ENCODE measurements at regions of chr16 and their contacts with region 1.

Region 1: DNA sequence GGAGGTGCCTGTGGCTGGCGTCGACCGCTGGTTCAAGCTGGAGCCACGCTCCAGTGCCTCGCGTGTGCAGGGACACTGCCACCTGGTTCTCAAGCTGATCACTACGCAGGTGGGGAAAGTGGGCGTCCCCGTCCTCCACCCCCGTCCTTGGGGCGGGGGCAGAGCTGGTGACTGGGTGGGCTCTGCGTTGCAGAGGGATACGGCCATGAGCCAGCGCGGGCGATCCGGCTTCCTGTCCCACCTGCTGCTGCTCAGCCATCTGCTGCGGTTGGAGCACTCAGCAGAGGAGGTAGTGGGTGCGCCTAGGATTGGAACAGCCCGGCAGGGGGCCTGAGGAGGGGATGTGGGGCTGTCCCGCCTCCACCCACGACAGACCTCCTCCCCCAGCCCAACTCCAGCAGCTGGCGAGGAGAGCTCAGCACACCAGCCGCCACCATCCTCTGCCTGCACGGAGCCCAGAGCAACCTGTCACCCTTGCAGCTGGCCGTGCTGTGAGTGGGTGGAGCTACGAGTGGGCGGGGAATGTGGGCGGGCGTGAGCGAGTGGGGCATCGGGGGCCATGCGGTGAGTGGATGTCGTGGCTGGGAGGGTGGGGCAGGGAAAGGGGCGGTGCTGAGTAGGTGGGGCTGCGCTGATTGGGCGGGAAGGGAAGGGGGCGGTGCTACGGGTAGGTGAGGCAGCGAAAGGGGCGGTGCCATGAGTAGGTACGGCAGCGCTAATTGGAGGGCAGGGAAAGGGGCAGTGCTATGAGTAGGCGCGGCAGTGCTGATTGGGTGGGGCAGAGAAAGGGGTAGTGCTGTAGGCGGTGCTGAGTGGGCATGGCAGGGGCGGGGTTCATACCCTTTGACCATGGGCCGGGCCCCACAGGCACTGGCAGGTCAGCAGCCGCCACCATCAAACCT is 8.9 kb downstream of the TSR3 start:
- DNase-seq: peak; percentile 98
- ATAC-seq: peak; percentile 86
- H3K4me3 ChIP-seq: peak overlapping the region in 4 of 5 experiments; percentile 38 to 68 (median 44)
- H3K4me3 Mint-ChIP-seq: peak overlapping the region; percentile 86
- H3K27ac ChIP-seq: peak overlapping the region in 1 of 2 donors; percentile 42
- H3K27ac Mint-ChIP-seq: peak overlapping the region; percentile 91
- H3K4me1 ChIP-seq: peaks cover 16 to 30% of the 10 kb centered on the region in 2 donors
- H3K4me1 Mint-ChIP-seq: peaks cover 23% of the 10 kb centered on the region
- H3K27me3 ChIP-seq: no peaks in the 10 kb centered on the region
- H3K27me3 Mint-ChIP-seq: no peaks in the 10 kb centered on the region
- CTCF ChIP-seq: peak; percentile 23

Region 2: GRCh38 chr16:1308977-1309885 is 33.5 kb before region 1 on chr16 and contains the start of gene UBE2I:
- CTCF ChIA-PET with region 1: interaction called, 3 read pairs
- POLR2A ChIA-PET with region 1: interaction called, 11 read pairs
- intact Hi-C with region 1: loop called (anchors 2 kb)
- DNase-seq: peak; percentile 100
- ATAC-seq: peak; percentile 74
- H3K4me3 ChIP-seq: peak within 1 kb of the TSS; percentile 80 to 90 (median 86)
- H3K4me3 Mint-ChIP-seq: peak within 1 kb of the TSS; percentile 99
- H3K27ac ChIP-seq: peak within 1 kb of the TSS; percentile 99 to 100
- H3K27ac Mint-ChIP-seq: peak within 1 kb of the TSS; percentile 100
- H3K4me1 ChIP-seq: peaks cover 41 to 65% of the 10 kb centered on the region in 2 donors
- H3K4me1 Mint-ChIP-seq: peaks cover 52% of the 10 kb centered on the region
- H3K27me3 ChIP-seq: no peaks in the 10 kb centered on the region
- H3K27me3 Mint-ChIP-seq: no peaks in the 10 kb centered on the region
- CTCF ChIP-seq: no peak
- total RNA-seq, gene UBE2I: 253 and 265 TPM in 2 replicates

Region 3: DNA sequence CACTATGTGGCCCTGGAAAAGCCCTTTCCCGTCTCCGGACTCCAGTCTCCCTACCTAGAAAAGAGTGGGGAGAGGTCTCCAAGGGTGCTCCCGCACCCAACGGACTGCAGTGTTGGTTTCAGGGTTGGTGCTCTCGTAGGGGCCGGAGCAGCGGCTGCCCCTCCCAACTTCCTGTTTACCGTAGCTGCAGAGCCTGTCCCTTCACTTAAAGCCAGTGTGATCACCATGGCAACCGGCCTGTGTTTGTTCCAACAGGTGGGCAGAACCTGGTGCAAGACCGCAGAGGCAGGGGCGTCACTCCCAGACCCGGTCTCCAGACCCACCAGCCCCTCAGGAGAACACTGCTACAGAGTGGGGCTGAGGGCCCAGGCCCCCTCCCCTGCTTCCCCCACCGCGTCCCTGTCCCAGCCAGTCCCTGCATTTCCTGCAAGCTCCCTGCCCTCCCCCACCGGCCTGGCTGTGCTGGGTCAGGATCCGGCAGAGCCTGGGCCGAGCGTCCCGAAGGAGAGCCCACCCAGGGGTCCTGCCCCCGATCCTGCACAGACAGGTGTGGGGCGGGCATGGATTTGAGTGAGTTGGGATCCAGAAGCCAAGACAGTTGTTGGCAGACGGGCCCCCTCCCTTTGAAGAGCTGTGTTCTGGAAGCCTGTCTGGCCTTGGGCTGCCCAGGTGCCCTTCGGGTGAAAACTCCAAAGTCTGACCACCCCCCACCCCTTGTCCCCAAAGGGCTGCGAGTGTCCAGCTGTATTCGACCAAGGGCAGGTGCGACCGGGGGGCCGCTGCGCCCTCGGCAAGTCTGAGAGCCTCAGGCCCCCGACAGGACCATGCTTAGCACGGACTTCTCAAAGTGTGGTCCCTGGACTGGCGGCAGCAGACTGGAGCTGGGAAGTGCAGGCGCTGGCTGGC is 10.8 kb before region 1 on chr16:
- CTCF ChIA-PET with region 1: interaction called, 8 read pairs
- POLR2A ChIA-PET with region 1: interaction called, 10 read pairs
- intact Hi-C with region 1: loop called (anchors 1 kb)
- DNase-seq: peak; percentile 90
- ATAC-seq: peak; percentile 65
- H3K4me3 ChIP-seq: peak overlapping the region; percentile 34 to 63 (median 48)
- H3K4me3 Mint-ChIP-seq: peak overlapping the region; percentile 88
- H3K27ac ChIP-seq: peak overlapping the region; percentile 90 to 91
- H3K27ac Mint-ChIP-seq: peak overlapping the region; percentile 96
- H3K4me1 ChIP-seq: peaks cover 48 to 66% of the 10 kb centered on the region in 2 donors
- H3K4me1 Mint-ChIP-seq: peaks cover 23% of the 10 kb centered on the region
- H3K27me3 ChIP-seq: peaks cover 0 to 47% (median 20%) of the 10 kb centered on the region in 4 experiments
- H3K27me3 Mint-ChIP-seq: peaks cover 7% of the 10 kb centered on the region
- CTCF ChIP-seq: no peak

Region 4: DNA sequence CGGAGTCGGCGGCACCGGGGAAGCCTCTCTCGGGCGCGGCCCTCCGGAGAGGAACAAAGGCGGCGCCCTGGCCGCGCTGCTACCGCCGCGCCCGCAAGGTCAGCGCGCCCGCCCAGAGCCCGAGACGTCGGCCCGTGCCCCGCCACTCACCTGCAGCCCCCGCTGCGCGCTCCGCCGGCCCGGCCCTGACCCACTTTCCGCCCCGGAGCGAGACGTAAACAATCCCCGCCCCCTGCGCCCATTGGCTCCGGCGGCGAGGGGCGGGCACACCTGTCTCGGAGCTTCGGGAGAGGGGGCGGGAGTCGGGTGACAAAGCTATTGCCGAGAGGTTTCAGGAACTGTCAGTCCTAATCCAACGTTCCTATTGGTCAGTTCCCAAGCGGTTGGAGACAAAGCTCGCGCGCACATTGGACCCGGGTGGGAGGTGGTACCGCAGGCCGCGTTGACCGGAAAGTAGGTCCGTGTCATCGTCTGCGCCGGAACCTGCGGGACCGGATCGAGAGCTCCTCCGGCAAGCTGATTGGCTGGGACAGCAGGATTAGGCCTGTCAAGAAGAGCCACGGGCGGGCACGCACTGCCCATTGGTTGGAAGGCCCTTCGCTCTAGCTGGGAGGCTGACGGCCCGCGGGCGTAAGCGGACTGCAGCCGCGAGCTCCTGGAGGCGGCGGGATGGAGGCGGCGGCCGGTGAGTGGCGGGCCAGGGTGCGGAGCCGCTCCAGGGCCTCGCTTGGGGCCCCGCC is 439.7 kb after region 1 on chr16 and contains the starts of genes NUBP2 and SPSB3:
- CTCF ChIA-PET with region 1: no interaction called
- POLR2A ChIA-PET with region 1: no interaction called
- intact Hi-C with region 1: loop called (anchors 2 kb)
- DNase-seq: peak; percentile 99
- ATAC-seq: peak; percentile 85
- H3K4me3 ChIP-seq: peak within 1 kb of the TSS; percentile 75 to 96 (median 83)
- H3K4me3 Mint-ChIP-seq: peak within 1 kb of the TSS; percentile 89
- H3K27ac ChIP-seq: peak within 1 kb of the TSS; percentile 47 to 76
- H3K27ac Mint-ChIP-seq: peak within 1 kb of the TSS; percentile 91
- H3K4me1 ChIP-seq: peaks cover 10 to 31% of the 10 kb centered on the region in 2 donors
- H3K4me1 Mint-ChIP-seq: peaks cover 22% of the 10 kb centered on the region
- H3K27me3 ChIP-seq: no peaks in the 10 kb centered on the region
- H3K27me3 Mint-ChIP-seq: no peaks in the 10 kb centered on the region
- CTCF ChIP-seq: no peak
- total RNA-seq, gene NUBP2: 50.2 and 52.6 TPM in 2 replicates
- total RNA-seq, gene SPSB3: 91.2 and 95.5 TPM in 2 replicates